CD4-positive, alpha-beta T cell (primary cell): ENCODE measurements at regions of chr5 and their contacts with region 1.

Region 1: DNA sequence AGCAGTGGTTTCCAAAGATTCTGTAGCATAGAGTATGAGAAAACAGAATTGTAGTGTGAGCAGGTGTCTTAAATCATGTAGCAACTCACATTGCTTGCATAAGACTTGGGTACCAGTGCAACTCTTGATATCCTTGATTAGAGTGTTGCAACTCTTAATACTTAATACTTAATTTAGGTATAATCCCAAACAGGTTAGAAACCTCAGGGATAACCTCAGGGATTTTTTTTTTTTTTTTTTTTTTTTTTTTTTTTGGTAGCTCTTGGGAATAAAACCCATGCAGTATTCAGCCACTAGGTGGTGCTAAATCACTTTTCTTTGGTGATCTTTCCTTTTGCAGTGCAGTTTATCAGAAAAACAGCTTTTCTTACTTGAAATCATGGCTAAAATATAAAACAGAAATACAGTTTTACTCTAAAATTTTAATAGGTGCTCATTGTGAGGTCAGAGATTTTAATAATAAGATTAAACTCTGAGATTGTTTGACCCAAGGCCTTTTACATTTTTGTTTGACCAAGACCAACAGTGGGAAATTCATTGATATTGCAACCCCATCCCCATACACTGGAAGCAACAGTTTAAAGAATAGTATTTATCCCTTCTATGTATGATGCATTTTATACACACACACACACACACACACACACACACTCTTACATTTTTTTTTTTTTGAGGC is 55.3 kb downstream of the ERAP1 start:
- DNase-seq: peak in 6 of 14 experiments; percentile 17 to 82 (median 68)
- ATAC-seq: peak; percentile 67
- H3K4me3 ChIP-seq: no peak overlapping the region
- H3K4me3 Mint-ChIP-seq: no peak overlapping the region
- H3K27ac ChIP-seq: no peak overlapping the region
- H3K27ac Mint-ChIP-seq: no peak overlapping the region
- H3K4me1 ChIP-seq: no peaks in the 10 kb centered on the region
- H3K4me1 Mint-ChIP-seq: no peaks in the 10 kb centered on the region
- H3K27me3 ChIP-seq: no peaks in the 10 kb centered on the region
- H3K27me3 Mint-ChIP-seq: no peaks in the 10 kb centered on the region
- CTCF ChIP-seq: peak; percentile 83

Region 2: GRCh38 chr5:96763026-96763425 is 10.5 kb after region 1 on chr5:
- CTCF ChIA-PET with region 1: interaction called, 12 read pairs
- POLR2A ChIA-PET with region 1: interaction called, 4 read pairs
- intact Hi-C with region 1: no loop called
- DNase-seq: no peak
- ATAC-seq: no peak
- H3K4me3 ChIP-seq: no peak overlapping the region
- H3K4me3 Mint-ChIP-seq: no peak overlapping the region
- H3K27ac ChIP-seq: no peak overlapping the region
- H3K27ac Mint-ChIP-seq: peak overlapping the region; percentile 2
- H3K4me1 ChIP-seq: no peaks in the 10 kb centered on the region
- H3K4me1 Mint-ChIP-seq: peaks cover 3% of the 10 kb centered on the region
- H3K27me3 ChIP-seq: no peaks in the 10 kb centered on the region
- H3K27me3 Mint-ChIP-seq: no peaks in the 10 kb centered on the region
- CTCF ChIP-seq: no peak

Region 3: GRCh38 chr5:96771395-96771794 is 18.9 kb after region 1 on chr5:
- CTCF ChIA-PET with region 1: interaction called, 12 read pairs
- POLR2A ChIA-PET with region 1: no interaction called
- intact Hi-C with region 1: no loop called
- DNase-seq: peak in 1 of 14 experiments; percentile 37
- ATAC-seq: no peak
- H3K4me3 ChIP-seq: no peak overlapping the region
- H3K4me3 Mint-ChIP-seq: no peak overlapping the region
- H3K27ac ChIP-seq: no peak overlapping the region
- H3K27ac Mint-ChIP-seq: peak overlapping the region; percentile 81
- H3K4me1 ChIP-seq: no peaks in the 10 kb centered on the region
- H3K4me1 Mint-ChIP-seq: peaks cover 8% of the 10 kb centered on the region
- H3K27me3 ChIP-seq: no peaks in the 10 kb centered on the region
- H3K27me3 Mint-ChIP-seq: no peaks in the 10 kb centered on the region
- CTCF ChIP-seq: no peak

Region 4: DNA sequence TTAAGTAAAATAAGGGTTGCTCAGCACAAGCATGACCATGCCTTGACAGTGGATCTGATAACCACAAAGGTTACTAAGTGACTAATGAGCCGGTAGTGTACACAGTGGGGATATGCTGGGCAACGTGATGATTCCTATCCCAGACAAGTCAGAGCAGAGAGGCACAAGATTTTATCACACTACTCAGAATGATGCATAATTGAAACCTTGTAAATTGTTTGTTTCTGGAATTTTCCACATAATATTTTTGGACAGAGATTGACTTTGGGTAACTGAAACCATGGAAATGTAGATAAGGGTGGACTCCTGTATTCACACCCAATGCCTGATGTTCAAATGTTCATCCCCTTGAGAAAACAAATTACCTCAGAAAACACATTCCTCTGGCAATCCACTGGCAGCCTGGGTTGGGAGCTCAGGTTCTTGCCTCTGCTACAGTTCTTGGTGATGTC is 71.4 kb after region 1 on chr5:
- CTCF ChIA-PET with region 1: interaction called, 3 read pairs
- POLR2A ChIA-PET with region 1: no interaction called
- intact Hi-C with region 1: loop called (anchors 2 to 5 kb)
- DNase-seq: no peak
- ATAC-seq: peak; percentile 30
- H3K4me3 ChIP-seq: no peak overlapping the region
- H3K4me3 Mint-ChIP-seq: no peak overlapping the region
- H3K27ac ChIP-seq: no peak overlapping the region
- H3K27ac Mint-ChIP-seq: no peak overlapping the region
- H3K4me1 ChIP-seq: peaks cover 16% of the 10 kb centered on the region
- H3K4me1 Mint-ChIP-seq: peaks cover 49% of the 10 kb centered on the region
- H3K27me3 ChIP-seq: no peaks in the 10 kb centered on the region
- H3K27me3 Mint-ChIP-seq: no peaks in the 10 kb centered on the region
- CTCF ChIP-seq: no peak

Region 5: GRCh38 chr5:97162045-97162444 is 409.6 kb after region 1 on chr5:
- CTCF ChIA-PET with region 1: interaction called, 7 read pairs
- POLR2A ChIA-PET with region 1: interaction called, 4 read pairs
- intact Hi-C with region 1: loop called (anchors 1 kb)
- DNase-seq: peak in 12 of 14 experiments; percentile 16 to 82 (median 34)
- ATAC-seq: peak; percentile 49
- H3K4me3 ChIP-seq: no peak overlapping the region
- H3K4me3 Mint-ChIP-seq: no peak overlapping the region
- H3K27ac ChIP-seq: no peak overlapping the region
- H3K27ac Mint-ChIP-seq: no peak overlapping the region
- H3K4me1 ChIP-seq: no peaks in the 10 kb centered on the region
- H3K4me1 Mint-ChIP-seq: peaks cover 14% of the 10 kb centered on the region
- H3K27me3 ChIP-seq: no peaks in the 10 kb centered on the region
- H3K27me3 Mint-ChIP-seq: no peaks in the 10 kb centered on the region
- CTCF ChIP-seq: peak; percentile 98